HCT116 (cell line): ENCODE measurements at regions of chr6 and their contacts with region 1.

Region 1: GRCh38 chr6:116881236-116881635 is 4.2 kb downstream of the RFX6 start:
- DNase-seq: peak; percentile 7
- ATAC-seq: peak; percentile 60; the same call in 1 of the 2 replicates
- H3K4me3 ChIP-seq: no peak overlapping the region
- H3K27ac ChIP-seq: no peak overlapping the region
- H3K4me1 ChIP-seq: no peaks in the 10 kb centered on the region
- H3K27me3 ChIP-seq: no peaks in the 10 kb centered on the region
- CTCF ChIP-seq: peak; percentile 19 to 58 (median 58); a peak in 4 of 6 replicates
- POLR2A ChIP-seq: no peak
- RAD21 ChIP-seq: peak; percentile 56

Region 2: DNA sequence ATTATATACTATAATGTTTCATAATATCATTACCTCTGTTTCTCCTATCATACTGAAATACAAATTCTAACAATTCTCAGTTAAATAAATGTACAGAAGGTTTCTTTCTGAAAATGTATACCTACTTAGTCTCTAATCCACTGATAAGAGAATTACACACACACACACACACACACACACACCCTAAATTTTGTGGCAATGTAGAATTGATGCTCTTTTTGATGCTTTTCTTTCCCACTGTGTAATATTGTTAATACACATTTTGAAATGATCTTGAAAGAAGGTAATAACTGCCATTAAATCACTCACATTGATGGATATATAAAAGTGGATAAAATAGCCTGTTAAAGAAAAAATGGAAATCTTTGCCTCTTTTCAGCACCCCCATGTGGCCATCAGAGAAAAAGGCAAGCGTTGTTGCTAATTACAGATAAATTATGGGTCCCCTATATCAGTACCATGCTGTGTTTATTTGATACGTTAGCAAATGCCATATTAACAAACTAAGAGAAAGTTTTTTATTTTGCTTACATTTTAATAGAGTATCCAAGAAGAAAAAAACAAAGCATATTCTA is 307.5 kb after region 1 on chr6:
- CTCF ChIA-PET with region 1: interaction called, 4 read pairs
- POLR2A ChIA-PET with region 1: no interaction called
- RAD21 ChIA-PET with region 1: no interaction called
- intact Hi-C with region 1: loop called (anchors 2 kb)
- DNase-seq: peak; percentile 6
- ATAC-seq: peak; percentile 70
- H3K4me3 ChIP-seq: no peak overlapping the region
- H3K27ac ChIP-seq: no peak overlapping the region
- H3K4me1 ChIP-seq: no peaks in the 10 kb centered on the region
- H3K27me3 ChIP-seq: no peaks in the 10 kb centered on the region
- CTCF ChIP-seq: peak; percentile 48 to 76 (median 69); a peak in 5 of 6 replicates
- POLR2A ChIP-seq: no peak
- RAD21 ChIP-seq: peak; percentile 50

Region 3: GRCh38 chr6:117317261-117317660 is 436.0 kb after region 1 on chr6:
- CTCF ChIA-PET with region 1: no interaction called
- POLR2A ChIA-PET with region 1: no interaction called
- RAD21 ChIA-PET with region 1: no interaction called
- intact Hi-C with region 1: loop called (anchors 10 kb)
- DNase-seq: peak; percentile 13
- ATAC-seq: peak; percentile 78
- H3K4me3 ChIP-seq: no peak overlapping the region
- H3K27ac ChIP-seq: no peak overlapping the region
- H3K4me1 ChIP-seq: no peaks in the 10 kb centered on the region
- H3K27me3 ChIP-seq: no peaks in the 10 kb centered on the region
- CTCF ChIP-seq: peak; percentile 51 to 67 (median 59)
- POLR2A ChIP-seq: no peak
- RAD21 ChIP-seq: peak; percentile 76